Uterus (tissue), 4 donors: ENCODE measurements at regions of chr11 and their contacts with region 1.

Region 1: GRCh38 chr11:47373876-47374720 is 4.2 kb downstream of the SPI1 start:
- DNase-seq: peak; percentile 83
- H3K4me3 ChIP-seq: no peak overlapping the region
- H3K27ac ChIP-seq: peak overlapping the region in 1 of 2 donors; percentile 40
- H3K4me1 ChIP-seq: no peaks in the 10 kb centered on the region
- H3K27me3 ChIP-seq: no peaks in the 10 kb centered on the region
- CTCF ChIP-seq: peak; percentile 90 to 94 (median 90)
- POLR2A ChIP-seq: no peak

Region 2: DNA sequence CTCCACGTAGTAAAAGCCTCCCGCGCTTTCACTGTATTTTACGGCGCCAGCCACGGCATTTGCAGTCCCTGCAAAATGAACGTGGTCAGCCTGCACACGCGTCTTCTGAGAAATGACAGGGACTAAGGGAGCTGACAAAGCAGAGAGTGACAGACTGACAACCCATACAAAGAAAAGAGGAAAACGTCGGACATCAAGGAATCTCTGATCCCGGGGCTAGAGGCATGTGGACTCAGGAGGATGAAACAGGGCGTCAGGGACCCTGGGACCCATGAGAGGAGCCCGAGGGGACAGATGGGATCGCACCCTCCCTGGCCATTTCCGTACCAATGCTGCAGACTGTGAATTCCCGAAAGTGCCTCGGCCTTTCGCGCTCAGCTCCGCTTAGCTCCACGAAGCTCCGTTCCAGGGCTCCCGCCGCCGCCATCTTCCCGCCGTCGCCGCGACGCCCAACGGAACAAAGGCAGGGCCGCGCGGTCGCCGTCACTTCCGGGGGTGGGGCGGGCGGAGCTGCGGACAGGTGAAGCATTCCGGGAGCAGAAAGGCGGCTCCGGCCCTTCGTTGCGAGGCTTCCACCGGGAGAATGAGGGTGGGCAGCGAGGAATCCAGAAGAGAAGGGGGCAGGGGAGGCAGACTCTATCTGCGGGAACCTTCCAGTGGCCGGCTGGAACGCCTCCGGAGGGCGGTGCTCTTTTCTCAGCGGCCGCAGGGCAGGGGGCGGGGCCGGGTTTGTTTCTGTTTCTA is 474.0 kb after region 1 on chr11 and contains the start of gene NUP160:
- intact Hi-C with region 1: loop called (anchors 10 kb)
- DNase-seq: peak; percentile 83 to 84
- H3K4me3 ChIP-seq: peak within 1 kb of the TSS; percentile 79 to 91
- H3K27ac ChIP-seq: peak within 1 kb of the TSS; percentile 88 to 92
- H3K4me1 ChIP-seq: peaks cover 4% of the 10 kb centered on the region in 2 donors
- H3K27me3 ChIP-seq: no peaks in the 10 kb centered on the region
- CTCF ChIP-seq: no peak
- POLR2A ChIP-seq: peak; percentile 64 to 81
- total RNA-seq, gene NUP160: 11.8 to 90.8 (median 40.4) TPM

Region 3: GRCh38 chr11:47917643-47918369 is 543.7 kb after region 1 on chr11:
- intact Hi-C with region 1: no loop called
- DNase-seq: peak; percentile 77 to 84
- H3K4me3 ChIP-seq: no peak overlapping the region
- H3K27ac ChIP-seq: peak overlapping the region; percentile 66 to 71
- H3K4me1 ChIP-seq: peaks cover 0 to 7% of the 10 kb centered on the region in 2 donors
- H3K27me3 ChIP-seq: no peaks in the 10 kb centered on the region
- CTCF ChIP-seq: no peak
- POLR2A ChIP-seq: no peak